HCT116 (cell line): ENCODE measurements at regions of chr19 and their contacts with region 1.

Region 1: GRCh38 chr19:13060964-13061927 is 41.4 kb downstream of the LYL1 start:
- DNase-seq: peak; percentile 59
- ATAC-seq: peak; percentile 86
- H3K4me3 ChIP-seq: peak overlapping the region; percentile 51 to 66
- H3K27ac ChIP-seq: peak overlapping the region; percentile 78
- H3K4me1 ChIP-seq: peaks cover 41 to 56% of the 10 kb centered on the region in 2 experiments
- H3K27me3 ChIP-seq: no peaks in the 10 kb centered on the region
- CTCF ChIP-seq: peak; percentile 87 to 97 (median 92)
- POLR2A ChIP-seq: no peak
- RAD21 ChIP-seq: peak; percentile 99

Region 2: DNA sequence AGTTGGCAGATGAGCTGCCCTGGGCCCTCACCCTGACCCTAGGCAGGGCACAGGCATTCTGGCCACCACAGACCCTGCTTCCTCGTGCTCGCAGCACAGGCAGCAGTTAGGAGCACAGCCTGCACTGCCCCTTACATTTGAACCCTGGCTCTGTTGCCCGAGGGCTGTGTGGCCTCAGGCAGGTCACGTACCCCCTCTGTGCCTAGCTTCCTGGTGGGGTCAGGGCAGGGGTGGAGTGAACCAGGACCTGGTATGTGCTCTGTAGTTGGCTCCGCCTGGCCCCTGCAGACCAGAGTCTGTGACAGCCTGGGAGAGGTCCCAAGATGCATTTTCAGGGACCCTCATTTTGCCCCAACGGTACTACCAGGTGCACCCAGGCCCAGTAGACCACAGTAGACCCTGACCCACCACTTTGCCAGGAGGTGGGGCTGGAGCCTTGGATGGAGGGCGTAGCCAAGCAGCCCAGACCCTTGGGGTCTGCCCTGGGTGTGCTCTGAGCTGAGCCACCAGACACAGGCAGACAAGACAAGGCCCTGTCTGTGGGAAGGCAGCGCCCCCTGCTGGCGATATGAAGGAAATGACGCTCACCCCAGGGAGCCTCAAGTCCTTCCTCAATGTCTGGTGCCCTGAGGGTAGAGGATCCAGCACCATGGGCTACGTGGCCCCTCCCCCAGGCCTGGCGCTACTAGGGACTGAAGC is 32.3 kb after region 1 on chr19:
- CTCF ChIA-PET with region 1: interaction called, 21 read pairs
- POLR2A ChIA-PET with region 1: no interaction called
- RAD21 ChIA-PET with region 1: interaction called, 5 to 6 read pairs
- intact Hi-C with region 1: no loop called
- DNase-seq: peak; percentile 70
- ATAC-seq: peak; percentile 80
- H3K4me3 ChIP-seq: no peak overlapping the region
- H3K27ac ChIP-seq: no peak overlapping the region; the same call in 1 of the 2 replicates
- H3K4me1 ChIP-seq: peaks cover 6 to 27% of the 10 kb centered on the region in 2 experiments; a peak in 3 of 4 replicates
- H3K27me3 ChIP-seq: no peaks in the 10 kb centered on the region
- CTCF ChIP-seq: peak; percentile 84 to 94 (median 92)
- POLR2A ChIP-seq: no peak
- RAD21 ChIP-seq: peak; percentile 99